ENCODE measurements at regions of chr5 and their contacts with region 1.

Region 1: GRCh38 chr5:37637165-37637845 is 202.5 kb downstream of the GDNF start:
- H3K4me3 ChIP-seq: no peak overlapping the region
- H3K27ac ChIP-seq: no peak overlapping the region
- H3K4me1 ChIP-seq: no peaks in the 10 kb centered on the region
- CTCF ChIP-seq: no peak

Region 2: DNA sequence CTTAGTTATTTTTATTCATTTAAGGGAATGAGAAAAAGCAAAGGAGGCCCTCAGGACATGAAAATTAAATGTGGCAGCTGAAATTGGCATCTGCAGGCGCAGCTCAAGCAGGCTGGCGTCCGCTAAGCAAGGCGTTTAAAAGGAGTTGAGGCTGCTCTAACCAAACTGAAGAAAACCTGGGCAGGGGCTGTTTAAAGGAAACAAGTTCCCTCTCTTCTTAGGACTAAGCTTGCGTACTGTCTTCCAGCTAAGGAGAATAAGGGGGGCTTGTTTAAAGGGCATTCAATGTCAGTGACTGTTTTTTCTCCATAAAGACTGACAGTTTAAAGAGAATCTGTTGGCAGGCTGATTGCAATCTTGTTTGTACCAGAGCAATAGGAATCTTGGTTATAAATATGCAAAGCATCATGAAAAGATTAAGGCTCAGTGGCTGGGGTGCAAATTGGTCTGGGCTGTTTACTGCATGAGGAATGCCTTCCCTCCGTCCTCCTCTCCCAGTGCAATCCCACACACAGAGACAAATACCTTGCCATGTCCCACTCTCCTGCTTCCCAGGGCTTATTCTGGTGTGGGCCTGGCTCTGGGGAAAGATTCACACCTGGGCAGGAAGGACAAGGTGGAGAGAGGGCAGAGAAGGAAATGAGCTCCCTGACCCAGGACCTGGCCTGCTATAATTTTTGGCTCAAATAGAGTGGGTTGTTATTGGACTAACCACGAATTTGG is 1005.0 kb after region 1 on chr5:
- CTCF ChIA-PET with region 1: no interaction called
- POLR2A ChIA-PET with region 1: interaction called, 10 read pairs
- H3K4me3 ChIP-seq: no peak overlapping the region
- H3K27ac ChIP-seq: no peak overlapping the region
- H3K4me1 ChIP-seq: no peaks in the 10 kb centered on the region
- CTCF ChIP-seq: no peak